MCF 10A (cell line): ENCODE measurements at regions of chr7 and their contacts with region 1.

Region 1: GRCh38 chr7:115211171-115211570 is 289.3 kb downstream of the MDFIC start:
- DNase-seq: no peak
- H3K4me3 Mint-ChIP-seq: no peak overlapping the region
- H3K27ac Mint-ChIP-seq: no peak overlapping the region
- H3K4me1 Mint-ChIP-seq: no peaks in the 10 kb centered on the region
- H3K27me3 Mint-ChIP-seq: peaks cover 47% of the 10 kb centered on the region
- CTCF ChIP-seq: no peak

Region 2: DNA sequence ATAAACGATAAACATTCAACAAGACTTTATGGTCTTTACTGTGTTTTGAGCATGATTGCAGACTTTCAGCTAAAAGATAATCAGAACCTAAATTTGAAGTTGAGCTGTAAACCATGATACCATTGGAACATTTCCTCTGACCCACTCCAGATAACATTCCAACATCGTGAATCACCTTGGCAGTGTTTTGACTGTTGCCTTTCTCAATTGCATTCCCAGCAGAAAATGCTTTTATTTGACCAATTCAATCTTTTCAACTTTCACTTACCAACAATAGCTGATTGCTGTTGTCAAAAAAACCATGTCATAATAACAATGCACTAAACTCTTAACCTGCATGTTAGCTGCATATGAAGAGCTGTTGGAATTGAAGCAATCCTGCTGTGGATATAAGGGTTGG is 123.7 kb before region 1 on chr7:
- CTCF ChIA-PET with region 1: no interaction called
- POLR2A ChIA-PET with region 1: no interaction called
- intact Hi-C with region 1: no loop called
- DNase-seq: peak; percentile 53
- H3K4me3 Mint-ChIP-seq: no peak overlapping the region
- H3K27ac Mint-ChIP-seq: no peak overlapping the region
- H3K4me1 Mint-ChIP-seq: peaks cover 11% of the 10 kb centered on the region
- H3K27me3 Mint-ChIP-seq: no peaks in the 10 kb centered on the region
- CTCF ChIP-seq: no peak

Region 3: DNA sequence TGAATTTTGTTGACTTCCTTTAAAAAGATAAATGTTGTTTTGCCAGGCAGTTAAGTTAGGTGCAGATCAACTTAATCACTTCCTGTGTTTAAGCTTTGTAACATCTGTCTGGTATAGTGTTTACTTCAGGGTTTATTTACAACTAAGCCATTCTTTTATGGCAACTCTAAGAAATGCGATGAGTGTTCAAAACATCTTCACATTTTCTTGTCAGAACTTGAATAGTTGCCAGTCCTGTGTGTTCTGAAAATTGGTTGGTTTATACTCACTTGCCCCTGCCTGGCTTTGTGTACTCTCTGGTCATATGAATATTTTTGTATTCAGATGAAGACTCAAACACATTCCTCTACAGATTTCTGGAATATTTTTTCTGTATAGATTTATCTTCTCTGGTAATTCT is 37.9 kb after region 1 on chr7:
- CTCF ChIA-PET with region 1: no interaction called
- POLR2A ChIA-PET with region 1: no interaction called
- intact Hi-C with region 1: loop called (anchors 5 kb)
- DNase-seq: no peak
- H3K4me3 Mint-ChIP-seq: no peak overlapping the region
- H3K27ac Mint-ChIP-seq: no peak overlapping the region
- H3K4me1 Mint-ChIP-seq: no peaks in the 10 kb centered on the region
- H3K27me3 Mint-ChIP-seq: no peaks in the 10 kb centered on the region
- CTCF ChIP-seq: no peak

Region 4: GRCh38 chr7:115499956-115500355 is 288.8 kb after region 1 on chr7:
- CTCF ChIA-PET with region 1: no interaction called
- POLR2A ChIA-PET with region 1: no interaction called
- intact Hi-C with region 1: no loop called
- DNase-seq: no peak
- H3K4me3 Mint-ChIP-seq: no peak overlapping the region
- H3K27ac Mint-ChIP-seq: no peak overlapping the region
- H3K4me1 Mint-ChIP-seq: no peaks in the 10 kb centered on the region
- H3K27me3 Mint-ChIP-seq: peaks cover 87% of the 10 kb centered on the region
- CTCF ChIP-seq: no peak